ENCODE measurements at regions of chr21 and their contacts with region 1.

Region 1: DNA sequence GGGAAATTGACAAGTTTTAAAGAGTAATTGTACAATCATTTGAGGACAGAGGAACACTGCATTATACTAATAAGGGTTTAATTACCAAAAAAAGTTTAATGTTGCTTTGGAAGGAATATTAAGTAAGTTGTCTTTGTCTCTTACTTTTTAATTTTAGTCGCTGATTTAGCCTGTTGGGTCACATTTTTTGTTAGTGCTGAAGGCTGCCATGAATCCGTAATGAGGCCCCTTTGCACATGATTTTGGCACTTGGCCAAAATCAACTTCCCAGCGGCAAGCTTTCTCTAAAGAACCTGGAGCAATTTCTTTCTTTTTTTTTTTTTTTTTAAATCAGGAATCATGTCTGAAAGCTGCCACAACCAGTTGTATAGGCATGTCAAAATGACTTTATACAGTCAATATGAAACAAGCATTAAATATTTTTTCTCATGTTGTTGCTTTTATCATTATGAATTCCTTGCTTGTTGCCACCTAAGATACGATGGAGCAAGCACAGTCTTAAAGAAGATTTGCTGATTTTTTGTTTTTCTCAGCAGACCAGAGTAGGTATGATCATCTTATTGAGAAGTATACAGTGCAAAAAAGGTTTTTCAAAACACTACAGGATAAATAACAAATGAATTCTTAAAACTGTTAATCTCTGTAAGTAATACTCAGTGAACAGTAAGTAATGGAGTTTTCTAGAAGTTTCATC is 690.4 kb downstream of the USP25 start:
- DNase-seq: peak; percentile 50
- ATAC-seq: peak; percentile 72

Region 2: GRCh38 chr21:16534408-16535101 is 114.4 kb after region 1 on chr21:
- intact Hi-C with region 1: loop called (anchors 5 kb)
- DNase-seq: peak; percentile 77
- ATAC-seq: peak; percentile 76

Measured in Right ventricle myocardium superior (tissue), 1 donor.